ENCODE measurements at regions of chr2 and their contacts with region 1.

Region 1: GRCh38 chr2:231925303-231926179 is 655 bp downstream of the NPPC start:
- DNase-seq: peak; percentile 75 to 94 (median 82)
- ATAC-seq: peak; percentile 97
- H3K4me3 ChIP-seq: peak overlapping the region; percentile 7 to 26
- H3K27ac ChIP-seq: no peak overlapping the region
- H3K4me1 ChIP-seq: peaks cover 13 to 25% of the 10 kb centered on the region in 2 donors
- H3K27me3 ChIP-seq: peaks cover 49 to 88% of the 10 kb centered on the region in 2 donors
- CTCF ChIP-seq: peak; percentile 91 to 97

Region 2: GRCh38 chr2:232137356-232138147 is 212.0 kb after region 1 on chr2:
- intact Hi-C with region 1: loop called in 1 of 2 experiments (anchors 5 kb)
- DNase-seq: no peak
- ATAC-seq: no peak
- H3K4me3 ChIP-seq: no peak overlapping the region
- H3K27ac ChIP-seq: no peak overlapping the region
- H3K4me1 ChIP-seq: no peaks in the 10 kb centered on the region
- H3K27me3 ChIP-seq: no peaks in the 10 kb centered on the region
- CTCF ChIP-seq: no peak

Region 3: DNA sequence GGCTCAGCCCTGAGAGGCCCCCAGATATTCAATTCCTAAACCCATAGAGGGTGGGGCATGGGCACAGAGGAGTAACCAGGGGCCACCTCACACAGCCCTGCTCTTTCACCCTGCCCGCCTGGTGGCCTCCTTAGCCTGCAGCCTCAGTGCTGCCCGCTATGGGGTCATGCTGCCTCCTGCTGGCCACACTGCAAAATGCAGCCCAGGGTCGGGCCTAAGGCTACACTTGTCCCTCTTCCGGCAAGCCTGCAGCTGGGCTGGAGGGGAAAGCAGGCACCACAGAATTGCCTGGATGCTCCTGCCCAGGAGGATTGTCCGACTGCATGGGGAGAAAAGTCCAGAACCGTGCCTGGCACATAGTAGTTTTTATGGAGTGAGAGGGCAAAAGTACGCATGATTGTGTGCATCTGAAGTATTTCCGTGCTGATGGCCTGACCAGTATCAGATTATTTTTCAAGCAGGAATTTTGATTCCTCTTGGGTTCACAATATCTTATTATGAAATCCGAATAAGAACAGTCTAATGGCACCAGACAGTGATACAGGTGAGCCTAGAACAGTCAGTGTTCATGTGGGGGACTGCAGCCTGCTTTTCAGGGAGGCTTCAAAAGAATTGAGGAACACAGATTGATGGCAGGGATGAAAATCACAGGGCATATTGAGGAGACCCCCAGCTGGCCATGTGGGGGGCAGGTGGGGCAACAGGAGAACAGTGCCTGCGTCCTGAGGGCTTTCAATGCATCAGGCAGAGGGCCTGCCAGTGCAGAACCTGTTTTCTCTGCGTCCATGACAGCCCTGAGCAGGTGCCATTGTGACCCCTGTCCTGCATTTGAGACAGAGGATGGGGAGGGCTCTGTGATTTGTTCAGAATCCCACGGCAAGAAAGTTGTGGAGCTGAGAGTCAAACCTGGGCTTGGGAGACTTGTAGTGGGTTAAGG is 401.8 kb after region 1 on chr2:
- intact Hi-C with region 1: loop called (anchors 5 to 10 kb)
- DNase-seq: peak; percentile 17 to 94 (median 66)
- ATAC-seq: peak; percentile 84
- H3K4me3 ChIP-seq: no peak overlapping the region
- H3K27ac ChIP-seq: no peak overlapping the region
- H3K4me1 ChIP-seq: peaks cover 0 to 3% of the 10 kb centered on the region in 2 donors
- H3K27me3 ChIP-seq: no peaks in the 10 kb centered on the region
- CTCF ChIP-seq: peak; percentile 81 to 89